AG04449 (cell line): ENCODE measurements at regions of chr5 and their contacts with region 1.

Region 1: GRCh38 chr5:141338538-141339306 is at the start of gene PCDHGA2:
- DNase-seq: no peak
- H3K4me3 ChIP-seq: peak within 1 kb of the TSS; percentile 51
- CTCF ChIP-seq: peak; percentile 53

Region 2: DNA sequence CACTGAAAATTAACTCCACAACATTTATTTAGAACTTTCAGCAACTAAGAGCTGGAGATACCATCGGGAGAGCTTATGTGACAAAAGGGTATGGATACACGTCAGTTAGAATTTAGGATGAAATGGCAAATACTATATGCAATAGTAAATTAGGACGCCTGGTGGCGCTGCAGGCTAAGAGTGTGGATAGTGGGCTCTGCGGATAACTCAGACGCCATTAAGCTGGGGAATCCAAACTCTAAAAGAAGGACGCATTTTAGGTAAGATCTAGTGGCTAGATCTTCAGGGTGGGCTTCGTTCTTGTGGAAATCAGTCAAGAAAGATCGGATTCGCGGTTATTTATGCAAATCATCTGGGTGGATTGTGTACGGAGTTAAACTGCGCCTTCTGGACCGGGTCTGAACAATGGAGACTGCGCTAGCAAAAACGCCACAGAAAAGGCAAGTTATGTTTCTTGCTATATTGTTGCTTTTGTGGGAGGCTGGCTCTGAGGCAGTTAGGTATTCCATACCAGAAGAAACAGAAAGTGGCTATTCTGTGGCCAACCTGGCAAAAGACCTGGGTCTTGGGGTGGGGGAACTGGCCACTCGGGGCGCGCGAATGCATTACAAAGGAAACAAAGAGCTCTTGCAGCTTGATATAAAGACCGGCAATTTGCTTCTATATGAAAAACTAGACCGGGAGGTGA is 203.5 kb before region 1 on chr5 and contains the start of gene PCDHB5:
- CTCF ChIA-PET with region 1: no interaction called
- POLR2A ChIA-PET with region 1: no interaction called
- DNase-seq: no peak
- H3K4me3 ChIP-seq: peak within 1 kb of the TSS; percentile 3; the same call in 1 of the 2 replicates
- CTCF ChIP-seq: peak; percentile 6

Region 3: GRCh38 chr5:141320225-141321169 is 18.2 kb before region 1 on chr5 and contains the start of gene TAF7:
- CTCF ChIA-PET with region 1: interaction called, 24 read pairs
- POLR2A ChIA-PET with region 1: no interaction called
- DNase-seq: peak; percentile 63
- H3K4me3 ChIP-seq: peak within 1 kb of the TSS; percentile 85
- CTCF ChIP-seq: peak; percentile 82

Region 4: GRCh38 chr5:141326088-141326854 is 12.5 kb before region 1 on chr5:
- CTCF ChIA-PET with region 1: interaction called, 28 read pairs
- POLR2A ChIA-PET with region 1: no interaction called
- DNase-seq: no peak
- H3K4me3 ChIP-seq: peak overlapping the region; percentile 64
- CTCF ChIP-seq: peak; percentile 70

Region 5: GRCh38 chr5:141349917-141350619 is 11.3 kb after region 1 on chr5 and contains the start of gene PCDHGB1:
- CTCF ChIA-PET with region 1: interaction called, 17 read pairs
- POLR2A ChIA-PET with region 1: no interaction called
- DNase-seq: no peak
- H3K4me3 ChIP-seq: peak within 1 kb of the TSS; percentile 39
- CTCF ChIP-seq: peak; percentile 50